ENCODE measurements at regions of chr19 and their contacts with region 1.

Region 1: GRCh38 chr19:14073261-14073924 is 807 bp downstream of the MISP3 start:
- DNase-seq: peak; percentile 87
- ATAC-seq: peak; percentile 74
- H3K4me3 Mint-ChIP-seq: peak overlapping the region; percentile 87
- H3K27ac Mint-ChIP-seq: peak overlapping the region; percentile 80
- H3K4me1 Mint-ChIP-seq: peaks cover 21% of the 10 kb centered on the region
- H3K27me3 Mint-ChIP-seq: peaks cover 2% of the 10 kb centered on the region

Region 2: GRCh38 chr19:13597640-13598039 is 475.8 kb before region 1 on chr19:
- CTCF ChIA-PET with region 1: no interaction called
- POLR2A ChIA-PET with region 1: no interaction called
- intact Hi-C with region 1: loop called in 1 of 2 experiments (anchors 10 kb)
- DNase-seq: peak; percentile 74
- ATAC-seq: peak; percentile 95
- H3K4me3 Mint-ChIP-seq: no peak overlapping the region
- H3K27ac Mint-ChIP-seq: no peak overlapping the region
- H3K4me1 Mint-ChIP-seq: no peaks in the 10 kb centered on the region
- H3K27me3 Mint-ChIP-seq: peaks cover 10% of the 10 kb centered on the region

Region 3: DNA sequence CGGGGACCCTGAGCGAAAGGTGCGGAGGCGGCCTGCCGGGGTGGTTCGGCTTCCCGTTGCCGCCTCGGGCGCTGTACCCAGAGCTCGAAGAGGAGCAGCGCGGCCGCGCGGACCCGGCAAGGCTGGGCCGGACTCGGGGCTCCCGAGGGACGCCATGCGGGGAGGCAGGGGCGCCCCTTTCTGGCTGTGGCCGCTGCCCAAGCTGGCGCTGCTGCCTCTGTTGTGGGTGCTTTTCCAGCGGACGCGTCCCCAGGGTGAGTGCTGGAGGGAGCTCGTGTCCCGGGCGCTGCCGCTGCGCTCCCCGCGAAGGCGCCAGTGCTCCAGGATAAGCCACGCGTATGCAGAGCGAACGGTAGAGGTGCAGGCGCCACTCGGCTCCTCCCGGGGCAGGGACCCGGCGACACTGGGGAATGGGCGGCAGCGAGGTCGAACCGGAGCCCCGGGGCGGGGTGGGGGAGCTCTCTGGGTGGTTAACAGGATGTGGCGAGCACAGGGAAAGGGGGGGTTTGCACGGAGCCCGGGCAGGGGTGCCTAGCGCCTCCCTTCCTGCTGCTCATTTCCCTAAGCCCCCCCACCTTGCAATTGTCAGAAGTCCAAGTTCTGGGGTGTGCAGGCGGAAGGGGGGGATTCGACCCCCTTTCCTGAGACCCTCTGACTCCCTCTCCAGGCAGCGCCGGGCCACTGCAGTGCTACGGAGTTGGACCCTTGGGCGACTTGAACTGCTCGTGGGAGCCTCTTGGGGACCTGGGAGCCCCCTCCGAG is 41.5 kb before region 1 on chr19 and contains the start of gene IL27RA:
- CTCF ChIA-PET with region 1: interaction called, 5 read pairs
- POLR2A ChIA-PET with region 1: interaction called, 3 read pairs
- intact Hi-C with region 1: loop called in 1 of 2 experiments (anchors 5 kb)
- DNase-seq: peak; percentile 83
- ATAC-seq: peak; percentile 79
- H3K4me3 Mint-ChIP-seq: peak within 1 kb of the TSS; percentile 92
- H3K27ac Mint-ChIP-seq: peak within 1 kb of the TSS; percentile 90
- H3K4me1 Mint-ChIP-seq: peaks cover 18% of the 10 kb centered on the region
- H3K27me3 Mint-ChIP-seq: no peaks in the 10 kb centered on the region
- total RNA-seq, gene IL27RA: 49.8 to 52.0 TPM

Region 4: DNA sequence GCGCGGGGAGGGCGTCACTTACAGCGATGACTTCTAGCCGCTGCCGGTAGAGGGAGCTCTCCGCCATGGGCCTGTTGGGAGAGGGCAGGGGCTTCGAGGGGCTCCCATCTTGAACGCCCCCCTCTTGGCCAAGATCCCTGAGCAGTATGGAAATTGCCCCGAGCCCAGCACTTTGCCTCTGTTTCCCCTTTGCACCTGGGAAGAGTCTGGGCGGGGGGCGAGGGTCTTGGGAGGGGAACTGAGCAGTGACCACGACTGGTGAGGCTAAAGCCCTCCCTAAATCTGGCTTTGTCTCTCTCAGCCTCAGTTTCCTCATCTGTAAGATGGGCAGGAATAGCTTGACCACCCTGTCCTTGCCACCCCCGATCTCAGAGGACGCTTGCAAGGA is 14.3 kb before region 1 on chr19:
- CTCF ChIA-PET with region 1: interaction called, 49 read pairs
- POLR2A ChIA-PET with region 1: interaction called, 3 read pairs
- intact Hi-C with region 1: no loop called
- DNase-seq: peak; percentile 77
- ATAC-seq: peak; percentile 59
- H3K4me3 Mint-ChIP-seq: peak overlapping the region; percentile 50
- H3K27ac Mint-ChIP-seq: no peak overlapping the region
- H3K4me1 Mint-ChIP-seq: peaks cover 16% of the 10 kb centered on the region
- H3K27me3 Mint-ChIP-seq: peaks cover 31% of the 10 kb centered on the region

Region 5: DNA sequence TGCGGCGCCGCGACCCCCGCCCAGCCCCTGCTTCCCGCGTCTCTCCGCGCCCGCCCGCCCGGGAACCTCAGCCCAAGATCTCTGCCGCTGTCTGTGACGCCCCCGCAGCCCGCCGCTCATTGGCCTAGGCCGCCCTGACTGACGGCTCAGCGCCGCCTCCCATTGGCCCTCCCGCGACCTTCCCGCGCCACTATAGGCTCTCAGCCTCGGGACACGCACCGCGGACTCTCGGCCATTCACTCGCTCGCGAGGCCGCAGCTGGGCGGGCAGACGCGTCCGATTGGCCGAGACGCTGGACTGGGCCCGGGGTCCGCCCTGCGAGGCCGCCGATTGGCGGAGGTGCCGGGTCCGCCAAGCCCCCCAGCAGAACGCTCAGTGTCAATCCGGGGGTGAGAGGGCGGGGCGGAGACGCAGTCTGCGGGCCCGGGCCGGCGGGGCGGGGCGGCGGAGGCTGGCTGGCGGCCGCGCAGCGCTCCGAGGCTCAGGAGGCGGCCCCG is 44.3 kb after region 1 on chr19 and contains the start of gene PRKACA:
- CTCF ChIA-PET with region 1: interaction called, 7 read pairs
- POLR2A ChIA-PET with region 1: no interaction called
- intact Hi-C with region 1: loop called (anchors 1 to 2 kb)
- DNase-seq: peak; percentile 99
- ATAC-seq: peak; percentile 98
- H3K4me3 Mint-ChIP-seq: peak within 1 kb of the TSS; percentile 78
- H3K27ac Mint-ChIP-seq: peak within 1 kb of the TSS; percentile 77
- H3K4me1 Mint-ChIP-seq: peaks cover 41% of the 10 kb centered on the region
- H3K27me3 Mint-ChIP-seq: no peaks in the 10 kb centered on the region
- total RNA-seq, gene PRKACA: 58.1 to 68.7 TPM

Measured in activated CD4-positive, alpha-beta T cell treated with anti-CD3 and anti-CD28 coated beads for 36 hours (primary cell).